ENCODE measurements at regions of chr17 and their contacts with region 1.

Region 1: DNA sequence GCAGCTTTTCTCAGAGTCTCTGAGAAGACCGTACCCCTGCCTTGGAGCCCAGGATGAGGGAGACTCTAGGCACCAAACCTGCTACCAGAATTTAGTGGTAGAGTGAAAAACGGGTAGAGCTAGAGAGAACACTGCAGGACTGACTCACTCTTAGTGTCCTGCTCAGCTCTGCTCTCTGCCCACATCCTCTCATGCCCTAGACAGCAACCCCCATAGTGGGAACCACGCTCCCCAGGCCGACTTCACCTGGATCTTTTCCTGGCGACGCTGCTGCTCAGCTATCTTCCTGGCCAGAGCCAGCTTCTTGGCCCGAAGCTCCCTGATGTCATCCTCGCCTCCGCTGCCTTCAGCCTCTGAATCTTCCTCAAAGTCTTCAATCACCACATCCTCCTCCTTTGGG is 26.7 kb downstream of the HIC1 start:
- DNase-seq: no peak
- H3K4me3 ChIP-seq: no peak overlapping the region
- H3K27ac ChIP-seq: no peak overlapping the region
- H3K4me1 ChIP-seq: peaks cover 28% of the 10 kb centered on the region
- H3K27me3 ChIP-seq: no peaks in the 10 kb centered on the region
- CTCF ChIP-seq: no peak
- POLR2A ChIP-seq: no peak

Region 2: GRCh38 chr17:1899403-1900000 is 182.1 kb before region 1 on chr17:
- CTCF ChIA-PET with region 1: no interaction called
- POLR2A ChIA-PET with region 1: no interaction called
- dilution Hi-C with region 1: no loop called
- intact Hi-C with region 1: no loop called
- DNase-seq: no peak
- H3K4me3 ChIP-seq: no peak overlapping the region
- H3K27ac ChIP-seq: no peak overlapping the region
- H3K4me1 ChIP-seq: no peaks in the 10 kb centered on the region
- H3K27me3 ChIP-seq: no peaks in the 10 kb centered on the region
- CTCF ChIP-seq: peak in 1 of 2 donors; percentile 6
- POLR2A ChIP-seq: no peak

Region 3: GRCh38 chr17:1997927-1998784 is 83.4 kb before region 1 on chr17:
- CTCF ChIA-PET with region 1: no interaction called
- POLR2A ChIA-PET with region 1: no interaction called
- dilution Hi-C with region 1: no loop called
- intact Hi-C with region 1: no loop called
- DNase-seq: no peak
- H3K4me3 ChIP-seq: peak overlapping the region in 1 of 3 experiments; percentile 31
- H3K27ac ChIP-seq: no peak overlapping the region
- H3K4me1 ChIP-seq: peaks cover 4% of the 10 kb centered on the region
- H3K27me3 ChIP-seq: peaks cover 12 to 20% of the 10 kb centered on the region in 2 experiments
- CTCF ChIP-seq: no peak
- POLR2A ChIP-seq: no peak

Region 4: GRCh38 chr17:2070241-2071023 is 11.1 kb before region 1 on chr17:
- CTCF ChIA-PET with region 1: interaction called, 16 read pairs
- POLR2A ChIA-PET with region 1: no interaction called
- dilution Hi-C with region 1: no loop called
- intact Hi-C with region 1: loop called (anchors 1 kb)
- DNase-seq: no peak
- H3K4me3 ChIP-seq: no peak overlapping the region
- H3K27ac ChIP-seq: peak overlapping the region; percentile 93
- H3K4me1 ChIP-seq: peaks cover 62% of the 10 kb centered on the region
- H3K27me3 ChIP-seq: no peaks in the 10 kb centered on the region
- CTCF ChIP-seq: no peak
- POLR2A ChIP-seq: no peak

Measured in endothelial cell of umbilical vein (primary cell).